ENCODE measurements at regions of chr3 and their contacts with region 1.

Region 1: DNA sequence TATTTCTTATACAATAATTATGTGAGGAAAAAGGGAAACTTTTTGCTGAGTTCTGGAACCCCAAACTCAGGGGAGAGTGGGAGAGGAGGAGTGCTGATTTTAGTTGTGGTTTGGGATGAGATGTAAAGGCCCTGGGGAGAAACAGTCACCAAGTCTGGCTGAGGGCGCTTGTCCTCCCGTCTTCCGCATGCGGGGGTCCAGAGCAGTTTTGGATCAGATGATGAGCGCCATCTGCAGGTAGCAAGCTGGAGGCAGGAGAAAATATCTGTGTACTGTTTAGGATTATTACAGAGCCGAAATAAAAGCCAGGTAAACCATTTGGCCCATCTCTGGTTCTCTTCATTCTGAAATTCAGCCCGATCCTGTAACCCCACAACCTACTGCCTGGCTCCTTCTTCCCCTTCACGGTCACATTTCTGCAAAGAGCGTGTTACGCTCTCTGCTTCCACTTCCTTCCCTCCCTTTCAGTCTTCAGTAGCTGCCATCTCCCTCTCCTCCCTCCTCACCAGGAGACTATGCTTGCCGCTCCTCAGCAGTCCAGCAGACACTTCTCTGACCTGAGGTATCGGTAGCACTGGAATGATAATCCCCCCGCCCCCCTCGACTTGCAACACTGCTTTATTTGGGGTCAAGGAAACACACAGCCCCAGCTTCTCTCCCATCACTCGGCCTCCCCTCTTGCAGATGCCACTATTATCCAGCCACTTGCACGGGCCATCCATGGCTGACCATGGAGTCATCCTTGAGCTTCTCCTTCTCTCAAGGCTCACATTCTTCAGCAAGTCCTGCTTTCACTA is 1.4 kb upstream of the PARP14 start:
- DNase-seq: peak; percentile 93
- ATAC-seq: peak; percentile 67
- H3K4me3 Mint-ChIP-seq: peak overlapping the region; percentile 97
- H3K27ac Mint-ChIP-seq: peak overlapping the region; percentile 97
- H3K4me1 Mint-ChIP-seq: peaks cover 50% of the 10 kb centered on the region
- H3K27me3 Mint-ChIP-seq: no peaks in the 10 kb centered on the region
- CTCF ChIP-seq: peak; percentile 77

Region 2: GRCh38 chr3:122415720-122416654 is 263.3 kb before region 1 on chr3 and contains the start of gene WDR5B:
- CTCF ChIA-PET with region 1: interaction called, 10 read pairs
- POLR2A ChIA-PET with region 1: no interaction called
- intact Hi-C with region 1: loop called (anchors 10 kb)
- DNase-seq: peak; percentile 99
- ATAC-seq: peak; percentile 90
- H3K4me3 Mint-ChIP-seq: peak within 1 kb of the TSS; percentile 97
- H3K27ac Mint-ChIP-seq: peak within 1 kb of the TSS; percentile 98
- H3K4me1 Mint-ChIP-seq: peaks cover 46% of the 10 kb centered on the region
- H3K27me3 Mint-ChIP-seq: no peaks in the 10 kb centered on the region
- CTCF ChIP-seq: no peak
- total RNA-seq, gene WDR5B: 3.2 to 3.4 TPM

Region 3: GRCh38 chr3:122514123-122515019 is 164.9 kb before region 1 on chr3 and contains the start of gene KPNA1:
- CTCF ChIA-PET with region 1: interaction called, 10 read pairs
- POLR2A ChIA-PET with region 1: interaction called, 3 read pairs
- intact Hi-C with region 1: no loop called
- DNase-seq: peak; percentile 88
- ATAC-seq: peak; percentile 90
- H3K4me3 Mint-ChIP-seq: peak within 1 kb of the TSS; percentile 78
- H3K27ac Mint-ChIP-seq: peak within 1 kb of the TSS; percentile 86
- H3K4me1 Mint-ChIP-seq: peaks cover 34% of the 10 kb centered on the region
- H3K27me3 Mint-ChIP-seq: no peaks in the 10 kb centered on the region
- CTCF ChIP-seq: no peak
- total RNA-seq, gene KPNA1: 46.6 to 47.4 TPM

Region 4: GRCh38 chr3:122548076-122548475 is 131.2 kb before region 1 on chr3:
- CTCF ChIA-PET with region 1: interaction called, 14 read pairs
- POLR2A ChIA-PET with region 1: interaction called, 3 read pairs
- intact Hi-C with region 1: no loop called
- DNase-seq: no peak
- ATAC-seq: no peak
- H3K4me3 Mint-ChIP-seq: no peak overlapping the region
- H3K27ac Mint-ChIP-seq: no peak overlapping the region
- H3K4me1 Mint-ChIP-seq: peaks cover under 1% of the 10 kb centered on the region
- H3K27me3 Mint-ChIP-seq: no peaks in the 10 kb centered on the region
- CTCF ChIP-seq: no peak

Region 5: GRCh38 chr3:122564155-122564912 is 114.9 kb before region 1 on chr3 and contains the starts of genes DTX3L and PARP9:
- CTCF ChIA-PET with region 1: interaction called, 244 read pairs
- POLR2A ChIA-PET with region 1: interaction called, 32 read pairs
- intact Hi-C with region 1: loop called (anchors 1 kb)
- DNase-seq: peak; percentile 78
- ATAC-seq: peak; percentile 81
- H3K4me3 Mint-ChIP-seq: peak within 1 kb of the TSS; percentile 76
- H3K27ac Mint-ChIP-seq: peak within 1 kb of the TSS; percentile 90
- H3K4me1 Mint-ChIP-seq: peaks cover 58% of the 10 kb centered on the region
- H3K27me3 Mint-ChIP-seq: no peaks in the 10 kb centered on the region
- CTCF ChIP-seq: no peak
- total RNA-seq, gene DTX3L: 22.1 to 25.9 TPM
- total RNA-seq, gene PARP9: 17.8 to 18.5 TPM

Region 6: DNA sequence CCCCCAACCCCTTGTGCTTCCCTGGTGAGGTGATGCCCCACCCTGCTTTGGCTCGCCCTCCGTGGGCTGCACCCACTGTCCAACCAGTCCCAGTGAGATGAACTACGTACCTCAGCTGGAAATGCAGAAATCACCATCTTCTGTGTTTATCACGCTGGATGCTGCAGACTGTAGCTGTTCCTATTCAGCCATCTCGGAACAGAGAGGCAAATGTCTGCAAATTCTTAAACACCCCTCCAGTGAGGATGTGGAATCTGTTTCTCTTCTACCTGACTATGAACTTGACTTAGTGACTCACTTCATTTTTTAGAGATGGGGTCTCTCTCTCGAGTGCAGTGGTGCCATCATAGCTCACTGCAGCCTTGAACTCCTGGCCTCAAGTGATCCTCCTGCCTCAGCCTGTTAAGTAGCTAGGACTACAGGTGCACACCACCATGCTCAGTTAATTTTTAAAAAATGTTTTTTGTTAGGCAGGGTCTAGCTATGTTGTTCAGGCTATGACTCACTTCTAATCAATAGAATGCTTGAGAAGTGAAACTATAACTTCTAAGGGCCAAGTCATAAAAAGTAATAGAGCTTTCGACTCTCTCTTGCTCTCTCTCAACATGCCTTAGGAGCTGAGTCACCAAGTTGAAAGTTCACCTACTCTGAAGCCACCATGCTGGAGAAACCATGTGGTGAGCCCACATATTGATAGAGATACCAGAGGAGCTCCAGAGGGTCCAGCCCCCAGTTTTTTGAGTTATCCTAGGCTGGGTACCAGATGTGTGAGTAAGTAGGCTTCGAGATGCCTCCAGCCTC is 10.2 kb before region 1 on chr3:
- CTCF ChIA-PET with region 1: interaction called, 19 read pairs
- POLR2A ChIA-PET with region 1: interaction called, 4 read pairs
- intact Hi-C with region 1: no loop called
- DNase-seq: peak; percentile 60
- ATAC-seq: peak; percentile 94
- H3K4me3 Mint-ChIP-seq: no peak overlapping the region
- H3K27ac Mint-ChIP-seq: peak overlapping the region; percentile 27
- H3K4me1 Mint-ChIP-seq: peaks cover 14% of the 10 kb centered on the region
- H3K27me3 Mint-ChIP-seq: no peaks in the 10 kb centered on the region
- CTCF ChIP-seq: no peak

Region 7: GRCh38 chr3:122810734-122811133 is 131.5 kb after region 1 on chr3:
- CTCF ChIA-PET with region 1: no interaction called
- POLR2A ChIA-PET with region 1: no interaction called
- intact Hi-C with region 1: no loop called
- DNase-seq: no peak
- ATAC-seq: no peak
- H3K4me3 Mint-ChIP-seq: no peak overlapping the region
- H3K27ac Mint-ChIP-seq: no peak overlapping the region
- H3K4me1 Mint-ChIP-seq: no peaks in the 10 kb centered on the region
- H3K27me3 Mint-ChIP-seq: no peaks in the 10 kb centered on the region
- CTCF ChIP-seq: no peak

Measured in activated CD8-positive, alpha-beta T cell treated with anti-CD3 and anti-CD28 coated beads for 36 hours (primary cell).